Dendritic cell treated with granulocyte-macrophage colony-stimulating factor and Interleukin-4, amounts not matched to agents 40 ng/mL and 50 ng/mL, for 4 days (primary cell): ENCODE measurements at regions of chr1 and their contacts with region 1.

Region 1: GRCh38 chr1:23691499-23692307 is at the start of gene RPL11:
- H3K4me3 Mint-ChIP-seq: peak within 1 kb of the TSS; percentile 90
- H3K27ac Mint-ChIP-seq: peak within 1 kb of the TSS; percentile 94
- H3K4me1 Mint-ChIP-seq: peaks cover 44% of the 10 kb centered on the region
- H3K27me3 Mint-ChIP-seq: peaks cover 9% of the 10 kb centered on the region

Region 2: DNA sequence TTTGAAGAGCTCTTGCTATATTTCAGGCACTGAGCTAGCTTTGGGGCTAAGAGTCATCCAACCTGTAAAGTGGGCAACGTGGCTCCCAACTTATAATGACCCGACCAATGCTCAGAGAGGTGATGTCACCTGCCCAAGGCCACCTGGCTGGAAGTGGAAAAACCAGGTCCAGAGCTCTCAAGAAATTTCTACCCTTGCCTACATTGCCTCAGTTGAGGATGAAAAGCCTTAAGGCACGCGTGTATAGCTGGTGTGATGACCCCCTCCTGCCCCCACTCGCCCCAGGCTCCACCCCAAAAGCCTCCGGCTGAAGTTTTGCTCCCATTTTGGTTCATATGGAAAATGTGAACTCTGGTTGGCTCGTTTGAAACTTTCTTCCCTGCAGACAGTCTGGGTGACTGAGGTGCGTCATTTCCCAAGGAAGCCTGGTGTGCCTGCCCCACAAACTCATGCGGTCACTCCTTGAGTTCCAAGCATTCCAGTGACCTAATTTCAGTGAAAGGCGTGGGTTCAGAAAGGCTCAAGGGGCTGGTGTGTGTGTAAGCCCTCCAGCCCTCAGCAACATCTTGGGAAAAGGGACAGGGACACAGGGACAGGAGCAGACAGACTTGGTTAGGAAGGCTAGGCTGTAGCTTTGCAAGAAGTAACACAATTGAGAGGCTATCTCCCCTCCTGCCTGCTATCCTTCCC is 494.9 kb before region 1 on chr1:
- intact Hi-C with region 1: no loop called
- H3K4me3 Mint-ChIP-seq: no peak overlapping the region
- H3K27ac Mint-ChIP-seq: no peak overlapping the region
- H3K4me1 Mint-ChIP-seq: no peaks in the 10 kb centered on the region
- H3K27me3 Mint-ChIP-seq: peaks cover 13% of the 10 kb centered on the region

Region 3: GRCh38 chr1:23743287-23744052 is 51.8 kb after region 1 on chr1 and contains the start of gene ELOA:
- intact Hi-C with region 1: loop called (anchors 5 kb)
- H3K4me3 Mint-ChIP-seq: peak within 1 kb of the TSS; percentile 93
- H3K27ac Mint-ChIP-seq: peak within 1 kb of the TSS; percentile 91
- H3K4me1 Mint-ChIP-seq: peaks cover 42% of the 10 kb centered on the region
- H3K27me3 Mint-ChIP-seq: no peaks in the 10 kb centered on the region